Testis (tissue), 5 donors: ENCODE measurements at regions of chr21 and their contacts with region 1.

Region 1: DNA sequence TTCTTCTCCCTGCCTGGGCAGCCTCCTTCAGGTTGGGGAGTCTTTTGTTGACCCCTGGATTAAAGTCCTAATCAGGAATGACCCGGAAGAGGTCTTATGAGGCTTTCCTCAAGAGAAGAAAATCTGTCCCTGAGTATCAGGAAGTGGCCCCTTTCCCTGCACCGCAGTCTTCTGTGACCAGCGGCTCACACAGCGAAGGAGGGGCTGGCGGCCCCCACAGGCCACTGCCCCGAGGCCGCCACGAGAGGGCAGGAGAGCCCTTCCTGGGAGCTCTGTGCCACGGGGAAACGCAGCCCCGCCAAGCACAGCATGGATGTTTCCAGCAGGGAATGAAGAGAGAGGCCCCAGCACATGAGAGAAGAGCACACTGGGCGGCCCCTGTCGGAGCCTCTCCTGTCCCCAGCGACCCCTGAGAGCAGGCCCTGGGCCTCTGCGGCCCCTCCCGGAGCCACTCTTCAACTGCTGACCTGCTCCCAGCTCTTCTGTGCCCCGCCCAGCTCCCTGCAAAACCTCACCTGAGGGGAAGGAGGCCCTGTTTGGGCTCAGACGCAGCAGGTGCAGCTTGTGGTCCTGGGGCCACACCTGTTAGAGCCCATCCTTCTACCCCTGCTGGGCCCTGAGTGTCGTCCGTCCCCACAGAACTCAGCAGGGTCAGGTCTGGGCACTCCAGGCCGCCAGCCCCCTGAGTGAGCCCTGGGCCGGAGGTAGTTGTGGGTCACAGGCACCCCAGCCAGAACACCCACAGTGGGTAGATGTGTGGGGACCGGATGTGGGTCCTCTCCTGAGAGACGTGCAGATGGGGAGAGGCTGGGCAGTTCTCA is 4.9 kb upstream of the POFUT2 start:
- DNase-seq: peak; percentile 88
- H3K4me3 ChIP-seq: no peak overlapping the region
- H3K27ac ChIP-seq: peak overlapping the region; percentile 87 to 94
- H3K4me1 ChIP-seq: peaks cover 43% of the 10 kb centered on the region
- H3K27me3 ChIP-seq: no peaks in the 10 kb centered on the region
- CTCF ChIP-seq: peak; percentile 86 to 97 (median 93)
- POLR2A ChIP-seq: no peak

Region 2: DNA sequence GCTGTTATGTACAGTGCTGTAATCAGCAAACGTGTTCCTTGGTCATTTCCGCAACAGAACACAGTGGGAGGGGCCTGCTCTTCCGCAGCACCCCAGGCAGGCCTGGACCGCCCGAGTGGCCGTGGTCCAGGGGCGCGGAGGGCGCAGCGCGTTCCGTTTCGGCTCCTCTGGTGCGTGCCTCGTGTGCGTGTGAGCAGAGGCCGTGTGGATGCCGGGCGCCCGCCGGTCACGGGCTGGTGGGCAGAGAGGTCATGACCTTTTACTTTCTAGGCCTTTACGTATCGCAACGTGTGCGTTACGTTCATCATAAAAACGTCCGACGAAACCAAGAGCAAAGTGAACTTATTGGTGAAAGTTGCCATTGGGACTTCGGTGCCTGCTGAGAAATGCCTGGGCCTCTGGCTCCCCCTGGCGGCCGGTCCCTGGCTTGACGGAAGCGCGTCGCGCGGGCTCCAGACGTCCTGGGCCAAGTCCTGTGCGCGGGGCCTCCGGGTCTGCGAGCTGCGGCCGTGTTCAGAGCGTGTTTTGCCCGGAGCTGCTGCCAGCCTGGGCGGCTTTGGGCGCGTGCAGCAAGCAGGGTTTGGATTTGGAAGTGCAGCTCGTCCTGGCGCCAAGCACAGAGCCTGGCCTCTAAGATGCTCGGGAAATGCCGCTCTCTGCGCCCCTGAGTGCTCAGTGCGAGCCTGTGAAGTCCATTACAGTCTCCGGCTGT is 146.7 kb after region 1 on chr21:
- intact Hi-C with region 1: loop called (anchors 5 kb)
- DNase-seq: peak; percentile 91
- H3K4me3 ChIP-seq: peak overlapping the region in 1 of 2 donors; percentile 29
- H3K27ac ChIP-seq: peak overlapping the region; percentile 23 to 86
- H3K4me1 ChIP-seq: peaks cover 13% of the 10 kb centered on the region
- H3K27me3 ChIP-seq: no peaks in the 10 kb centered on the region
- CTCF ChIP-seq: peak; percentile 95 to 99 (median 98)
- POLR2A ChIP-seq: no peak